ENCODE measurements at regions of chr18 and their contacts with region 1.

Region 1: DNA sequence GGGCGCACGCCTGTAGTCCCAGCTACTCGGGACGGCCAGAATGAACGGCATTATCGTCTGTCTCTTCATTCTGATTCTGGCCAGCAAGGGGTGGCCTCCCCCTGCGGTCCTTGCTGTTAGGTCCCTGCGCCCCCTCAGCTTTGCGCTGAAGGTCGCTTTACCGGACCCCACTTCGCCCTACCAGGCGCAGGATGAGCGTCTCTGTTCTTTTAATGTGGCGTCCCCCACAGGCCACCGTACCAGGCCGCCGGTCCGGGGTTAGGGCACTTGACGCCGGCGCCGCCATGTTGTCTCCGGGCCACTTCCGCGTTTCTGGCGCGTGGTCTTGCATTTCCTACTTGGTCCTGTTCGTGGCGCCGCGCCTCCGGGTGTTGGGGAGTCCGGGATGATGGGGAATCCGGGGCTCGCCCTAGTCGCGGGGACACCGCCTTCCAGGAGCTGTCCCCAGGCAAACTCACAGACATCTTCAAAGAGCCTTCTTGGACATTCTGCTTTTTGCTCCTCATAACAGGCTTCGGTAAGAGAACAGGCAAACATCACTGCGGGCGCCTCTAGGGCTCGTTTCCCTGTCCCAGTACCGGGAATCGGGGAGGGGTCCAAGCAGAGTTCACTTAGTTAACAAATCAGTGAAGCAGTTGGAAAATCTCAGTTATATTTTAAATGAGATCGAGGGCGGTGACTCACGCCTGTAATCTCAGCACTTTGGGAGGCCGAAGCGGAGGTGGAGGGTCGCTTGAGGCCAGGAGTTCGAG is 8.5 kb upstream of the NARS1 start:
- DNase-seq: peak; percentile 97
- H3K4me3 Mint-ChIP-seq: peak overlapping the region; percentile 95
- H3K27ac Mint-ChIP-seq: peak overlapping the region; percentile 92
- H3K4me1 Mint-ChIP-seq: peaks cover 14% of the 10 kb centered on the region
- H3K27me3 Mint-ChIP-seq: no peaks in the 10 kb centered on the region

Region 2: GRCh38 chr18:57666818-57667497 is 36.8 kb after region 1 on chr18:
- CTCF ChIA-PET with region 1: interaction called, 6 read pairs
- intact Hi-C with region 1: loop called (anchors 1 kb)
- DNase-seq: no peak
- H3K4me3 Mint-ChIP-seq: no peak overlapping the region
- H3K27ac Mint-ChIP-seq: no peak overlapping the region
- H3K4me1 Mint-ChIP-seq: peaks cover 38% of the 10 kb centered on the region
- H3K27me3 Mint-ChIP-seq: no peaks in the 10 kb centered on the region

Region 3: DNA sequence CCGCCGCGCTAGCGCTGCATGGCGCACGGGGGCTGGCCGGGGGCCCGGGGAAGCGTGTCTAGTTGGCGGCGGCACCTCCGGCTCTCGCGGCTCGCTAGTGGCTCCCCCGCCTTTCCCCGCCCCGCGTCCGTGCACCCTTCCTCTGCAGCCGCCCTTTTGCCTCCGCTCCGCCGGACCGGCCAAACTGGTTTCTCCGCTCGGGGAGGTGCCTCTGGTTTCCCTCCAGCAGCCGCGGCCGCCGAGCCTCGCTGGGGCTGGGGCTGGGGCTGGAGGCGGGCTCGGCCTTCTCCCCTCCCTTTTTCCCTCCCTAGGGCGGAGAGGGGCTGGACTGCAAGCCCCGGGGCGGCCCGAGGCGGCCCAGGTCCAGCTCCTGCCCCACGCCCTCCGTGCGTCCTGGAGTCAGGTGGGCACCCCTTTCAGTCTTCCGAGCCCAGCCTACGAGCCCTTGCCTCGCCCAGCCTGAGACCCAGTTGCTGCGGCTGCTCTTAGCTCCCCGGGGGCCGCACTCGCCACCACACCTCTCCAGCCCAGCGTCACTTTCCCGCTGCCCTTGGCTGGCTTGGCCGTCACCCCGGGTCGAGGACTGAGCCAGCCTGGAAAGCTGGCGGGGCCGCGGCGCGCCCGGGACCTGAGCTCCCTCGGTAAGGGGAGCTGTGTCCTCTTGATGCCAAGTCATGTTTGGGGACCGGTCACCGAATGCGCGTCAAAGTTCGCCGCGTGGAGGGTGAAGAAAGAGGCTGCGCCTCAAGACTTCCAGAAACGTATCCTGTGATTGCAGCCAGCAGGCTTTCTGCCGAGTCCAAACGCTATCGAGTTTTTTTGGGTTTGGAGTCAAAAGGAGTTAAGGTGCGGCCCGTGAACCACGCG is 173.2 kb after region 1 on chr18 and contains the start of gene ATP8B1:
- CTCF ChIA-PET with region 1: no interaction called
- intact Hi-C with region 1: loop called (anchors 2 kb)
- DNase-seq: no peak
- H3K4me3 Mint-ChIP-seq: peak within 1 kb of the TSS; percentile 71
- H3K27ac Mint-ChIP-seq: no peak within 1 kb of the TSS
- H3K4me1 Mint-ChIP-seq: peaks cover 13% of the 10 kb centered on the region
- H3K27me3 Mint-ChIP-seq: peaks cover 49% of the 10 kb centered on the region
- total RNA-seq, gene ATP8B1: not detected

Region 4: GRCh38 chr18:57859314-57859713 is 229.1 kb after region 1 on chr18:
- CTCF ChIA-PET with region 1: interaction called, 6 read pairs
- intact Hi-C with region 1: loop called (anchors 2 kb)
- DNase-seq: peak; percentile 36
- H3K4me3 Mint-ChIP-seq: no peak overlapping the region
- H3K27ac Mint-ChIP-seq: no peak overlapping the region
- H3K4me1 Mint-ChIP-seq: no peaks in the 10 kb centered on the region
- H3K27me3 Mint-ChIP-seq: peaks cover 6% of the 10 kb centered on the region

Region 5: GRCh38 chr18:58117786-58118403 is 487.7 kb after region 1 on chr18:
- CTCF ChIA-PET with region 1: interaction called, 3 read pairs
- intact Hi-C with region 1: loop called (anchors 1 kb)
- DNase-seq: peak; percentile 24
- H3K4me3 Mint-ChIP-seq: no peak overlapping the region
- H3K27ac Mint-ChIP-seq: no peak overlapping the region
- H3K4me1 Mint-ChIP-seq: peaks cover 5% of the 10 kb centered on the region
- H3K27me3 Mint-ChIP-seq: no peaks in the 10 kb centered on the region

Region 6: GRCh38 chr18:58135701-58136331 is 505.6 kb after region 1 on chr18:
- CTCF ChIA-PET with region 1: no interaction called
- intact Hi-C with region 1: loop called (anchors 1 kb)
- DNase-seq: peak; percentile 74
- H3K4me3 Mint-ChIP-seq: no peak overlapping the region
- H3K27ac Mint-ChIP-seq: no peak overlapping the region
- H3K4me1 Mint-ChIP-seq: peaks cover 7% of the 10 kb centered on the region
- H3K27me3 Mint-ChIP-seq: peaks cover 9% of the 10 kb centered on the region

Region 7: DNA sequence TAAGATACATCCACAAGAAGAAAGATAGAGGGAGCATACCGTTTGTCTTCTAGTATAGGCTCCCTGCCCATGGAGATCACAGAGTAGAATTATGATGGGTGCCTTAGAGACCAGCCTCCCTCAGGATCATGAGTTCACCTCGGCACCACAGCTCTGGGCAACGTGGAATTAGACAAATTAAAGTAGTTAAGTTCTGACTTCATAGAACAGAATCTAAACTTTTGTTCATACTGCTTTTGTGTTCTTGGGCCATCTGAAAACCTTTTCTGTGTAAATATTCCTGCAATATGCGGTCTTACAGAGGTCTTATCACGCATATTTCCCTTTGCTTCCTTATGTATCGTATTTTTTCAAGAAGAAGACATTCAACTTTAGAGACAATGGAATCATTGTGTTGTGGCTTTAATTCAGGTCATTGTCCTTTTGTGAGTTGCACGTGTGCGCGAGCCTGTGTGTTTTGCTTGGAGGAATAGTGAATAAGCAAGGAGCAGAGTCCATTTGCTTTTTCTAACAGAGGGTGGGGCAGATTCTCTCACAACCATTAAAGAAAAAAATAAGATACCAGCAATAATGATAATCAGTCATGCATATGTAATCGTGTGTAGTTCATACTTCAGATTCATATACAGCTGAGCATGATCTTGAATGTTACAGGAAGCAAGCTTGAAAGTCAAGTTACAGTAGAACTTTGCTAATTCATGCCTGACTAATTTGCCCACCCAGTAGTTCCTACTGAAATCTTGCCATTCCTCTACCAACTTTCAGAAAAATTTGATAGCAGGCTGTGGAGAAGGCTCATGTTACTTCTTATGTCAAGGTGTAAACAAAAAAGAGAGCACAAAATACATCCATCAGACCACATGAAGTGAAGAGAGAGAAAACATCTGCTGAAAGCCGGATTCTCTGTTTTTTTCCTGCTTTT is 657.4 kb after region 1 on chr18:
- CTCF ChIA-PET with region 1: no interaction called
- intact Hi-C with region 1: no loop called
- DNase-seq: no peak
- H3K4me3 Mint-ChIP-seq: no peak overlapping the region
- H3K27ac Mint-ChIP-seq: no peak overlapping the region
- H3K4me1 Mint-ChIP-seq: no peaks in the 10 kb centered on the region
- H3K27me3 Mint-ChIP-seq: no peaks in the 10 kb centered on the region

Region 8: DNA sequence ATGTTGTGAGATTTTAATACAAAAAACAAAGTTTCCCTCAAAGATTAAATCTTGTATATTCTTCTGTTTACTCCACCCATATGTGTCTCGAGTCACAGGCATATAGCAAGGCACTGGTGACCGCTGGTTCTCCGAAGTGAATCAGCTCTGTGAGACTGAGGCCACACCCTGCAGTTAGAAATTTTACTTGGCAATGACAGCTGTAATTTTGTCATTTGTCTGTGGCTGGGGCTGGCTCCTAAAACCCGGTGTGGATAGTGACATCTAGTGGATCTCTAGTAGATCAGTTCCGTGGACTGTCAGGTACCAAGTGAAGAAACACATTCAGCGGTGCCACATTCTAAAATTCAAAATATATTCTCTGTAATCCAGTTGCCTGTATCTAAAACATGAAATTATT is 691.8 kb after region 1 on chr18:
- CTCF ChIA-PET with region 1: no interaction called
- intact Hi-C with region 1: loop called (anchors 1 kb)
- DNase-seq: peak; percentile 80
- H3K4me3 Mint-ChIP-seq: no peak overlapping the region
- H3K27ac Mint-ChIP-seq: no peak overlapping the region
- H3K4me1 Mint-ChIP-seq: peaks cover 16% of the 10 kb centered on the region
- H3K27me3 Mint-ChIP-seq: no peaks in the 10 kb centered on the region